ENCODE measurements at regions of chr18 and their contacts with region 1.

Region 1: GRCh38 chr18:5546660-5547059 is 2.9 kb upstream of the EPB41L3 start:
- DNase-seq: peak; percentile 76
- H3K4me3 ChIP-seq: no peak overlapping the region
- H3K27ac ChIP-seq: no peak overlapping the region
- H3K4me1 ChIP-seq: peaks cover 16% of the 10 kb centered on the region
- H3K27me3 ChIP-seq: no peaks in the 10 kb centered on the region
- CTCF ChIP-seq: peak; percentile 59 to 68
- POLR2A ChIP-seq: no peak

Region 2: GRCh38 chr18:5197032-5197434 is 349.6 kb before region 1 on chr18 and contains the start of gene AKAIN1:
- CTCF ChIA-PET with region 1: no interaction called
- POLR2A ChIA-PET with region 1: no interaction called
- dilution Hi-C with region 1: no loop called
- intact Hi-C with region 1: no loop called
- DNase-seq: peak; percentile 31
- H3K4me3 ChIP-seq: no peak within 1 kb of the TSS
- H3K27ac ChIP-seq: no peak within 1 kb of the TSS
- H3K4me1 ChIP-seq: no peaks in the 10 kb centered on the region
- H3K27me3 ChIP-seq: peaks cover 12 to 14% of the 10 kb centered on the region in 2 experiments
- CTCF ChIP-seq: no peak
- POLR2A ChIP-seq: no peak
- total RNA-seq, gene AKAIN1: not detected in 2 replicates

Region 3: DNA sequence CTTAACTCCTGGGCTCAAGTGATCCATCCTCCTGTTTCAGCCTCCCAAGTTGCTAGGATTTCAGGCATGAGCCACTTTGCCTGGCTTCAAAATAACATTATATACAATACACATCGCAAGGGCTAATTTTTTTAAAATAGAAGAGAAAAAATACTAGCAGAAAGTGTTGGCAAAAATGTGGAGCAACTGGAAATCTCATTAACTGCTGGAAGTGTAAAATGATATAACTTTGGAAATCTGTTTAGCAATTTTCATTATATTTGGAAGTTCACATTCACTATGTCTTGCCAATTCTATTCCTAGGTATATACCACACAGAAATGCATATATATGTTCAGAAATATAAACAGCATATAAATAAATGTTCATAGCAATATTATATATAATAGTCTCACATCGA is 196.0 kb before region 1 on chr18:
- CTCF ChIA-PET with region 1: no interaction called
- POLR2A ChIA-PET with region 1: no interaction called
- dilution Hi-C with region 1: no loop called
- intact Hi-C with region 1: no loop called
- DNase-seq: no peak
- H3K4me3 ChIP-seq: no peak overlapping the region
- H3K27ac ChIP-seq: no peak overlapping the region
- H3K4me1 ChIP-seq: no peaks in the 10 kb centered on the region
- H3K27me3 ChIP-seq: no peaks in the 10 kb centered on the region
- CTCF ChIP-seq: no peak
- POLR2A ChIP-seq: no peak

Region 4: DNA sequence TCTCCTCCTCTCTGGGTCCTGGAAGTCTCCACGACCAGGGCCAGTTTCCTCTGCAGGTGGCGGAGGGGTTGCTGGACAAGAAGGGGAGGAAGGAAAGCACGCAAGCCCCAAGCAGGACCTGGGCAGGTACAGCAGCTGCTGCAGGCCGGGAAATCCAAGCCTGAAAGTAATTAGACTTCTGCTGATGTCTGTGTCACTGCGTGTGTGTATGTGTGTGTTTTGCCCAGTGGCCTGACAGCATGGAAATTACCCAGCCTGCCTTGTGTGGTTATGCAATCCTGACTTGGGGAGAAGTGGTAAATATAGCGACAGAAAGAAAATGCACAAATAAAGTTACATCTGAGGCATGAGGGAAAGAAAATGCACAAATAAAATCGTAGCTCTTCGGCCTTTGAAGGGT is 129.3 kb before region 1 on chr18:
- CTCF ChIA-PET with region 1: interaction called, 30 read pairs
- POLR2A ChIA-PET with region 1: no interaction called
- dilution Hi-C with region 1: no loop called
- intact Hi-C with region 1: no loop called
- DNase-seq: no peak
- H3K4me3 ChIP-seq: no peak overlapping the region
- H3K27ac ChIP-seq: no peak overlapping the region
- H3K4me1 ChIP-seq: no peaks in the 10 kb centered on the region
- H3K27me3 ChIP-seq: no peaks in the 10 kb centered on the region
- CTCF ChIP-seq: no peak
- POLR2A ChIP-seq: no peak

Region 5: DNA sequence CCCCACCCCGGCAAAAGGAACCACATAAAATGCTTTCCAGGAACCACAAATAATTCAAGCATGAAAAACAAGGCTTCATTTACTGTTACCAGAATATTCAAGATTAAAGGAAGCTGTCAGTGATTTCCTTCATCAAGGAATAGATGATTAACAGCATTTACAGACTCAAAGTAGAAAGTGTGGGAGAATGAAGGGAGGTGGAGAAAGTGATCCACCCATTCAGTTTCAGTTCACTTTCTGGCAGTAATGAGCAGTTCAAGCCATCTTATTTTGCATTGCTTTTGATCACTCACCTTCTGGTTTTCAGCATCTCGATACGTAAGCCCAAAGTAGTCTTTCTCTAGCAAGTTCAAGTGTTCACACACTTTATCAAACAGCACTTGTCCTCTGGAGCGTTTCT is 101.8 kb before region 1 on chr18:
- CTCF ChIA-PET with region 1: interaction called, 17 read pairs
- POLR2A ChIA-PET with region 1: no interaction called
- dilution Hi-C with region 1: no loop called
- intact Hi-C with region 1: no loop called
- DNase-seq: no peak
- H3K4me3 ChIP-seq: no peak overlapping the region
- H3K27ac ChIP-seq: no peak overlapping the region
- H3K4me1 ChIP-seq: peaks cover 3% of the 10 kb centered on the region
- H3K27me3 ChIP-seq: no peaks in the 10 kb centered on the region
- CTCF ChIP-seq: no peak
- POLR2A ChIP-seq: no peak

Region 6: DNA sequence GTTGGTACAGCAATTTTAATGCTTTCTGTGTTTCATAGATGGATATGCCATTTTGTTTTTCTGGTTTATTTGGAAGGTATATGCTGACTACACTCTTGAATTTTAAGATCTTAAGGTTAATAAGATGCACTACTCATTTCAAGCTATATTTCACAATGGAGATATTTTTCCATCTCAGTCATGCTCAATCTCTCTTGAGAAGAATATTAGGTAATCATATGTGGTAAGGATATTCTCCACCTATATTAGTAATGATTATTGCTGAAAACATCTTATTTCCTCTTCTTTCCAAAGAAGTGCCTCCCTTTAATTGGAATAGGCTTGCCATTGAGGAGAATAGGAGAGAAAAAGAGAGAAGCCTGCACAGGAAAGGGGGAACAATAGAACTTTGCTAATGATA is 42.9 kb before region 1 on chr18:
- CTCF ChIA-PET with region 1: interaction called, 12 read pairs
- POLR2A ChIA-PET with region 1: no interaction called
- dilution Hi-C with region 1: no loop called
- intact Hi-C with region 1: no loop called
- DNase-seq: no peak
- H3K4me3 ChIP-seq: no peak overlapping the region
- H3K27ac ChIP-seq: no peak overlapping the region
- H3K4me1 ChIP-seq: no peaks in the 10 kb centered on the region
- H3K27me3 ChIP-seq: no peaks in the 10 kb centered on the region
- CTCF ChIP-seq: no peak
- POLR2A ChIP-seq: no peak

Region 7: GRCh38 chr18:5574843-5575242 is 28.2 kb after region 1 on chr18:
- CTCF ChIA-PET with region 1: interaction called, 7 read pairs
- POLR2A ChIA-PET with region 1: no interaction called
- dilution Hi-C with region 1: no loop called
- intact Hi-C with region 1: loop called (anchors 2 kb)
- DNase-seq: peak; percentile 7
- H3K4me3 ChIP-seq: no peak overlapping the region
- H3K27ac ChIP-seq: no peak overlapping the region
- H3K4me1 ChIP-seq: peaks cover 44% of the 10 kb centered on the region
- H3K27me3 ChIP-seq: no peaks in the 10 kb centered on the region
- CTCF ChIP-seq: no peak
- POLR2A ChIP-seq: no peak